ENCODE measurements at regions of chr16 and their contacts with region 1.

Region 1: GRCh38 chr16:57045694-57046381 is 46.5 kb upstream of the CPNE2 start:
- DNase-seq: peak; percentile 92
- H3K4me3 ChIP-seq: peak overlapping the region; percentile 51
- H3K27ac ChIP-seq: peak overlapping the region; percentile 98
- H3K4me1 ChIP-seq: peaks cover 76% of the 10 kb centered on the region
- CTCF ChIP-seq: peak; percentile 89

Region 2: DNA sequence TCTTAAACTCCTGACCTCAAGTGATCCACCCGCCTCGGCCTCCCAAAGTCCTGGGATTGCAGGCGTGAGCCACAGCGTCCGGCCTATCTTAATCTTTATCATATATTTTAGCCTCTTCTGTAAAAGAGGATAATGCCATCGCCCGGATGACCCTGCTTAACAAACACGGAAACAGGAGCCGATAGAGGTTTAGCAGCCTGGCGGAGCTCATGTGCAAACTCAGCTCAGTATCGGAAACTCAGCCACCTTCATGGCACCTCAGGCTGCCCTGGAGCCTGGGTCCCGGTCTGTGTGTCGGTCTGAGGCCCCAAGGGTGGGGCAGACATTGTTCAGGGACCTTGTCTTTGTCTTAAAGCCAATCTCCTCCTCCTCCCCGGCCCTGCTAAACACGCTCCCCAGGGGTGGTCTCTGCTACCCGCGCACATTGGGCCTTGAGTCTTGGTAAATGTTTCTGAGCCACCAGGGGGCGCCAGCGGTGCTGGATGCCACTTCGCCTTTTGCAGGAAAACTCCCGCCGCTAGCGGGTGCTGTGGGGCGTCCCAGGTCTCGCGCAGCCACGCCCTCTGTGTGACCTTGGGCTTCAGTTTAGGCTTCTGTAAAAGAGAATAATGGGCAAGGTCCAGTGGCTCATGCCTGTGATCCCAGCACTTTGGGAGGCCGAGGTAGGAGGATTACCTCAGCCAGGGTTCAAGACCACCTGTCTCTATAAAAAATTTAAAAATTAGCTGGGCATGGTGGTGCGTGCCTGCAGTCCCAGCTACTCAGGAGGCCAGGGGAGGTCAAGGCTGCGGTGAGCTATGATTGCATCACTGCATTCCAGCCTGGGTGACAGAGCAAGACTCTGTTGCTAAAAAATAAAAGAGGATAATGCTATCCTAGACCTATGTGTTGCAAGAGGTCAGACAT is 81.3 kb before region 1 on chr16:
- CTCF ChIA-PET with region 1: interaction called, 9 read pairs
- POLR2A ChIA-PET with region 1: interaction called, 5 read pairs
- intact Hi-C with region 1: loop called (anchors 1 kb)
- DNase-seq: peak; percentile 96
- H3K4me3 ChIP-seq: no peak overlapping the region
- H3K27ac ChIP-seq: peak overlapping the region; percentile 16
- H3K4me1 ChIP-seq: peaks cover 21% of the 10 kb centered on the region
- CTCF ChIP-seq: peak; percentile 100

Region 3: GRCh38 chr16:56977216-56977615 is 68.6 kb before region 1 on chr16:
- CTCF ChIA-PET with region 1: interaction called, 3 read pairs
- POLR2A ChIA-PET with region 1: interaction called, 14 read pairs
- intact Hi-C with region 1: no loop called
- DNase-seq: no peak
- H3K4me3 ChIP-seq: no peak overlapping the region
- H3K27ac ChIP-seq: peak overlapping the region; percentile 80
- H3K4me1 ChIP-seq: peaks cover 95% of the 10 kb centered on the region
- CTCF ChIP-seq: no peak

Region 4: GRCh38 chr16:57003439-57004386 is 42.1 kb before region 1 on chr16:
- CTCF ChIA-PET with region 1: interaction called, 4 read pairs
- POLR2A ChIA-PET with region 1: interaction called, 76 read pairs
- intact Hi-C with region 1: no loop called
- DNase-seq: peak; percentile 76
- H3K4me3 ChIP-seq: peak overlapping the region; percentile 43
- H3K27ac ChIP-seq: peak overlapping the region; percentile 74
- H3K4me1 ChIP-seq: peaks cover 76% of the 10 kb centered on the region
- CTCF ChIP-seq: no peak

Region 5: GRCh38 chr16:57167953-57168352 is 122.1 kb after region 1 on chr16:
- CTCF ChIA-PET with region 1: no interaction called
- POLR2A ChIA-PET with region 1: no interaction called
- intact Hi-C with region 1: loop called (anchors 1 kb)
- DNase-seq: peak; percentile 84
- H3K4me3 ChIP-seq: no peak overlapping the region
- H3K27ac ChIP-seq: no peak overlapping the region
- H3K4me1 ChIP-seq: peaks cover 10% of the 10 kb centered on the region
- CTCF ChIP-seq: peak; percentile 96